CD14-positive monocyte (primary cell): ENCODE measurements at regions of chr14 and their contacts with region 1.

Region 1: DNA sequence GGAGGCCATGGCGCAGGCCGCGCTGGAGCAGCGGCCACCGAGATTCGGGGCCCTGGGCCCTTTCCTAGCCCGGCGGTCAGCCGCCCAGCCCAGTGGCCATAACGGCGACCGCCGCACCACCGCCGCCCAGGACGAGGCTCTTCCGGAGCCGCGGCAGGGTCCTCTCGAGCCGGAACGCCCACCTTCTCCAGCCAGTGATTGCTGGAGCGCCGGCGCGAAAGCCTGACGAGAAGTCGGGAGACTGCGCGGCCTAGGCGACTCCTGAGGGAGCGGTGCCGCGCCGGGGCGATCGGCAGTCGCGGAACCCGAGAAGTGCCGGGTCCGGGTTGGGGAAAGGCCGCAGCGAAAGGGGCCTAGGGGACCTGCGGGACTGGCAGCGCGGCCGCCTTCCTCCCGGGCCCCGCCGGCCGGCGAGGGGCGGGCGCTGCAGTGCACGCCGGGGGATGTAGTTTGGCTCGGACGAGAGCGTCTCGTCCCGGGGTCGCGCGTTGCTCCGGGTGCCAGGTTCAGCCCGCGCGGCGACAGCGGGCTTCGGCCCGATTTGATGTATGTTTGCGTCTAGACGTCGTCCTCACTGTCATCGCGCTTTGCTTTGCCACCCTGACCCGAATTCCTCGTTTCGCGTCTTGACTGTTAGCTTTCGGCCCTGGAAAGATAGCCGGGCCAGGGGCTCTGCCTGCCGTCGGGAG is at the start of gene VTI1B:
- DNase-seq: peak; percentile 59 to 69 (median 69)
- H3K4me3 ChIP-seq: peak within 1 kb of the TSS; percentile 76 to 95 (median 89)
- H3K4me3 Mint-ChIP-seq: peak within 1 kb of the TSS; percentile 91 to 96
- H3K27ac ChIP-seq: peak within 1 kb of the TSS; percentile 83 to 97
- H3K27ac Mint-ChIP-seq: peak within 1 kb of the TSS; percentile 89 to 96 (median 94)
- H3K4me1 ChIP-seq: peaks cover 22 to 31% of the 10 kb centered on the region in 2 donors
- H3K4me1 Mint-ChIP-seq: peaks cover 28% of the 10 kb centered on the region
- H3K27me3 ChIP-seq: no peaks in the 10 kb centered on the region
- H3K27me3 Mint-ChIP-seq: peaks cover 0 to 2% (median 0%) of the 10 kb centered on the region in 3 donors
- CTCF ChIP-seq: no peak
- polyA plus RNA-seq, gene VTI1B: 31.3 to 84.7 (median 84.5) TPM

Region 2: DNA sequence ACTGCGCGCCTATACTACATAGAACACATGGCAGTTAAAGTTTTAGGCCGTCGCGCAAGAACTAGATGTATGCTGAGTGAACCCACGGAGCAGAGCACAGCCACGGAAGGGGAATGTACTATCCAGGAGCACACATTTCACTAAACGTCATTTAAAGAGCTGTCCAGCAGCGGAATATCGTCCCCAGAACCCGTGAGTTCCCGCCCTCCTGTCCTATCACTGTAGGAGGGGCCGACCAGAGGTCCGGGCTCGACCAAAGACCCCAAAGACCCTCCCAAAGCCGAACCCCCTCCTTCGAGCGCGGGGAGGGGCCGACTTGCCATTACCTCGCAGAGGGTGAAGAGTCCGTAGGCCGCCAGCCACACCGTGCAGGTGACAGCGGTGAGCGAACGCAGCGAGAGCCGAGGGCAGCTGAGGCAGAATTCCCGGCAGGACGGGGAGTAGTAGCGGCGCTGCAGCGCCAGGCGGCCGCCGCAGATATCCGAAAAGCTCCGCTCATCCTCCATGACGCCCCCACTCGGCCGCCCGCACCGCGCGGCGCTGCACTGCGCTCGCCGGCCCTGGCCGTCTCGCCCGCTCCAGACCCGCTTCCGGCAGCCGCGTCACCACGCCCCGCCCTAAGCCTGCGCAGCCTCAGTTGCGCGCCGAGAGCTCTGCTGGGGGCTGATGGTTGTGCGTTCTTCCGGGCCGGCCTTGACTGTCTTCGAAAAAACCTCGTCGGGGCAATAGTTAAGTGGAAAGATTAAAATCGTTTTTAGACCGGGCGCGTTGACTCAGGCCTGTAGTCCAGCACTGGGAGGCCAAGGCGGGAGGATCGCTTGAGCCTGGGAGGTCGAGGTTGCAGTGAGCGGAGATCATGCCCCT is 74.7 kb before region 1 on chr14 and contains the start of gene PIGH:
- intact Hi-C with region 1: loop called in 1 of 2 experiments (anchors 5 kb)
- DNase-seq: peak; percentile 86 to 89 (median 87)
- H3K4me3 ChIP-seq: peak within 1 kb of the TSS; percentile 79 to 100 (median 95)
- H3K4me3 Mint-ChIP-seq: peak within 1 kb of the TSS; percentile 91 to 97
- H3K27ac ChIP-seq: peak within 1 kb of the TSS; percentile 76 to 79
- H3K27ac Mint-ChIP-seq: peak within 1 kb of the TSS; percentile 90 to 98 (median 93)
- H3K4me1 ChIP-seq: peaks cover 15 to 20% of the 10 kb centered on the region in 2 donors
- H3K4me1 Mint-ChIP-seq: peaks cover 24% of the 10 kb centered on the region
- H3K27me3 ChIP-seq: no peaks in the 10 kb centered on the region
- H3K27me3 Mint-ChIP-seq: peaks cover 3 to 7% (median 5%) of the 10 kb centered on the region in 3 donors
- CTCF ChIP-seq: peak; percentile 76
- polyA plus RNA-seq, gene PIGH: 14.6 to 35.5 (median 18.0) TPM

Region 3: GRCh38 chr14:67619446-67620216 is 55.0 kb before region 1 on chr14 and contains the start of gene ARG2:
- intact Hi-C with region 1: loop called (anchors 5 to 10 kb)
- DNase-seq: peak; percentile 93 to 98 (median 94)
- H3K4me3 ChIP-seq: peak within 1 kb of the TSS; percentile 51 to 89 (median 75)
- H3K4me3 Mint-ChIP-seq: peak within 1 kb of the TSS; percentile 85
- H3K27ac ChIP-seq: peak within 1 kb of the TSS in 1 of 2 donors; percentile 73
- H3K27ac Mint-ChIP-seq: peak within 1 kb of the TSS; percentile 74 to 91 (median 83)
- H3K4me1 ChIP-seq: peaks cover 16 to 20% of the 10 kb centered on the region in 2 donors
- H3K4me1 Mint-ChIP-seq: peaks cover 24% of the 10 kb centered on the region
- H3K27me3 ChIP-seq: peaks cover 4 to 10% of the 10 kb centered on the region in 2 donors
- H3K27me3 Mint-ChIP-seq: peaks cover 13 to 27% (median 23%) of the 10 kb centered on the region in 3 donors
- CTCF ChIP-seq: no peak
- polyA plus RNA-seq, gene ARG2: 0.13 to 0.46 (median 0.33) TPM

Region 4: GRCh38 chr14:67787673-67788072 is 113.0 kb after region 1 on chr14:
- intact Hi-C with region 1: no loop called
- DNase-seq: no peak
- H3K4me3 ChIP-seq: no peak overlapping the region
- H3K4me3 Mint-ChIP-seq: no peak overlapping the region
- H3K27ac ChIP-seq: no peak overlapping the region
- H3K27ac Mint-ChIP-seq: no peak overlapping the region
- H3K4me1 ChIP-seq: no peaks in the 10 kb centered on the region
- H3K4me1 Mint-ChIP-seq: peaks cover 3% of the 10 kb centered on the region
- H3K27me3 ChIP-seq: no peaks in the 10 kb centered on the region
- H3K27me3 Mint-ChIP-seq: no peaks in the 10 kb centered on the region
- CTCF ChIP-seq: no peak

Region 5: GRCh38 chr14:68020999-68021663 is 346.5 kb after region 1 on chr14:
- intact Hi-C with region 1: no loop called
- DNase-seq: no peak
- H3K4me3 ChIP-seq: no peak overlapping the region
- H3K4me3 Mint-ChIP-seq: no peak overlapping the region
- H3K27ac ChIP-seq: no peak overlapping the region
- H3K27ac Mint-ChIP-seq: no peak overlapping the region
- H3K4me1 ChIP-seq: no peaks in the 10 kb centered on the region
- H3K4me1 Mint-ChIP-seq: no peaks in the 10 kb centered on the region
- H3K27me3 ChIP-seq: no peaks in the 10 kb centered on the region
- H3K27me3 Mint-ChIP-seq: peaks cover 0 to 6% (median 1%) of the 10 kb centered on the region in 3 donors
- CTCF ChIP-seq: no peak